CD4-positive, alpha-beta T cell (primary cell): ENCODE measurements at regions of chr3 and their contacts with region 1.

Region 1: DNA sequence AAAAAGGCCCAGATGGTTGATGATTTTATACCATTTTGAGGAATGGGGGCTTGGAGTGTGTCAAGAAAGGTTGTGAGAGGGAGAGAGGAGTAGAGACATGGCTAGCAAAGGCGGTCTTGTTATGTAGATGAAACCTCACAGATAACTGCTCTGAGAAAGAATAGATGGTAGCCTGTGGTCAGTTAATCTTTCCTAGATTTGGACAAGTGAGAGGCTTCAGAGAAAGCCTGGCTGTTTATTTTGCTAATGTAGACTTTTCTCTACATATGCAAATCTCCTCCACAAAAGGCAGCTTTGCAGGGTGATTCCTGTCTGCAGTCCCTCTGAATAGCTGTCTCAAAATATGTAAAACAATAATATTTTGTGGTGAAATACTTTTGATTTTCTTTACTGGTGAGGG is 177.3 kb downstream of the OTOL1 start:
- DNase-seq: no peak
- ATAC-seq: no peak
- H3K4me3 ChIP-seq: no peak overlapping the region
- H3K4me3 Mint-ChIP-seq: no peak overlapping the region
- H3K27ac ChIP-seq: no peak overlapping the region
- H3K27ac Mint-ChIP-seq: no peak overlapping the region
- H3K4me1 ChIP-seq: no peaks in the 10 kb centered on the region
- H3K4me1 Mint-ChIP-seq: no peaks in the 10 kb centered on the region
- H3K27me3 ChIP-seq: no peaks in the 10 kb centered on the region
- H3K27me3 Mint-ChIP-seq: no peaks in the 10 kb centered on the region
- CTCF ChIP-seq: no peak

Region 2: DNA sequence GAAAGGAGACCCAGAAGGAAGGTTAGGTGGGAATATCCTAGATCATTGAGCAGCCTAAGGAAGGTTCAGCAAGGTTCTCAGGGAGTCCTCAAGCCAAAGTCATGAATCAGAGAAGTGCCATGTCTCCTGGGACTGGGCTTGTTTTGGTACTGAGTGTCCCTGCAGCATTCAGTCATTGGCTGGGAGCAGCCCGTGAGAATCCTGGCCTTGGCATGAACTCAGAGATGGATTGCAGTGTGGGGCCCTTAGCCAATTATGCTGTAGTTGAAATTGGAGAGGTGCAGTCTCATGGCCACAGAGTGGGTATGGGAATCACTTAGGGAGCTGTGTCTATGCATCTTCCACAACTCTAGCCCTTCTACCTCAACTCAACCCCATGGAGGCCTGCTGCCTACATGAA is 934.8 kb before region 1 on chr3:
- CTCF ChIA-PET with region 1: no interaction called
- POLR2A ChIA-PET with region 1: no interaction called
- intact Hi-C with region 1: no loop called
- DNase-seq: no peak
- ATAC-seq: no peak
- H3K4me3 ChIP-seq: no peak overlapping the region
- H3K4me3 Mint-ChIP-seq: no peak overlapping the region
- H3K27ac ChIP-seq: no peak overlapping the region
- H3K27ac Mint-ChIP-seq: no peak overlapping the region
- H3K4me1 ChIP-seq: no peaks in the 10 kb centered on the region
- H3K4me1 Mint-ChIP-seq: no peaks in the 10 kb centered on the region
- H3K27me3 ChIP-seq: peaks cover 0 to 7% of the 10 kb centered on the region in 2 experiments
- H3K27me3 Mint-ChIP-seq: peaks cover 36% of the 10 kb centered on the region
- CTCF ChIP-seq: no peak

Region 3: GRCh38 chr3:161694682-161695564 is 21.1 kb after region 1 on chr3:
- CTCF ChIA-PET with region 1: no interaction called
- POLR2A ChIA-PET with region 1: no interaction called
- intact Hi-C with region 1: no loop called
- DNase-seq: no peak
- ATAC-seq: no peak
- H3K4me3 ChIP-seq: no peak overlapping the region
- H3K4me3 Mint-ChIP-seq: no peak overlapping the region
- H3K27ac ChIP-seq: no peak overlapping the region
- H3K27ac Mint-ChIP-seq: no peak overlapping the region
- H3K4me1 ChIP-seq: no peaks in the 10 kb centered on the region
- H3K4me1 Mint-ChIP-seq: no peaks in the 10 kb centered on the region
- H3K27me3 ChIP-seq: no peaks in the 10 kb centered on the region
- H3K27me3 Mint-ChIP-seq: no peaks in the 10 kb centered on the region
- CTCF ChIP-seq: no peak

Region 4: GRCh38 chr3:161740421-161740820 is 66.6 kb after region 1 on chr3:
- CTCF ChIA-PET with region 1: no interaction called
- POLR2A ChIA-PET with region 1: no interaction called
- intact Hi-C with region 1: loop called in 1 of 2 experiments (anchors 2 kb)
- DNase-seq: no peak
- ATAC-seq: no peak
- H3K4me3 ChIP-seq: no peak overlapping the region
- H3K4me3 Mint-ChIP-seq: no peak overlapping the region
- H3K27ac ChIP-seq: no peak overlapping the region
- H3K27ac Mint-ChIP-seq: no peak overlapping the region
- H3K4me1 ChIP-seq: no peaks in the 10 kb centered on the region
- H3K4me1 Mint-ChIP-seq: no peaks in the 10 kb centered on the region
- H3K27me3 ChIP-seq: no peaks in the 10 kb centered on the region
- H3K27me3 Mint-ChIP-seq: no peaks in the 10 kb centered on the region
- CTCF ChIP-seq: no peak